ENCODE measurements at regions of chr11 and their contacts with region 1.

Region 1: GRCh38 chr11:119975561-119976152 is 162.3 kb downstream of the TRIM29 start:
- DNase-seq: peak; percentile 67 to 97 (median 78)

Region 2: DNA sequence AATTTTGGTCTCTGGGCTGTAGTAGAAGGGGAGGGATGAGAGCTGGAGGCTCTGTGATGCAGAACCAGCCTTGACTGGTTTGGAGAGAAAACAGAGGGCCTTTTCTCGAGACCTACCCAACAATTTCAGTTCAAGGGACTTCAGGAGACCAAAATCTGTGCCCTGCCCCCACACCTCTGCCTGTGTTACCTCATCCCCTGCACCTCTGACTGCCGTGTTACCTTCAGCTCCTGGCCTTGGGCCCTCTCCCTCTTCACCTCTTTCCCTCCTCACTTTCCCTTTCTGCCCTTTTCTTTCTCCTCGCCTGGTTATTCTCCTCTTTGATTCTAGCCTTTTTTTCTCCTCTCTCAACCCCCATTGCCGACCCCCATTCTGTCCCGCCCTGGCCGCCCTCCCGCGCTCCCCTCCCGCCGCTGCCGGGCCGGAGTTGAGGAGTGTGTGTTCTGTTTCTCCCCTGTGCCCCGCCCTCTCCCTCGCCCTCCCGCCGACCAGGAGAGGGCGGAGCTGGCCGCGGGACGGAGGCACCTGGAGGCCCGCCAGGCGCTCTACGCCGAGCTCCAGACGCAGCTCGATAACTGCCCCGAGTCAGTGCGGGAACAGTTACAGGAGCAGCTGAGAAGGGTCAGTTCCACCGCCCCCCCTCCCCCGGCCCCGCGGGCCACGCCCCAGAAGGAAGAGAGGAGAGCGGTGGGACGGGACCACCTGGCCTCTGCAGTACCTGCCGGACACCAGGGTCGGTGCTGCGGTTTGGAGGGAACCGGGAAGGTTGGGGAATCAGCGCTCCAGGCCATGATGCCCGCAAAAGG is 1341.0 kb before region 1 on chr11:
- intact Hi-C with region 1: no loop called
- DNase-seq: peak in 5 of 10 donors; percentile 36 to 89 (median 71)

Region 3: DNA sequence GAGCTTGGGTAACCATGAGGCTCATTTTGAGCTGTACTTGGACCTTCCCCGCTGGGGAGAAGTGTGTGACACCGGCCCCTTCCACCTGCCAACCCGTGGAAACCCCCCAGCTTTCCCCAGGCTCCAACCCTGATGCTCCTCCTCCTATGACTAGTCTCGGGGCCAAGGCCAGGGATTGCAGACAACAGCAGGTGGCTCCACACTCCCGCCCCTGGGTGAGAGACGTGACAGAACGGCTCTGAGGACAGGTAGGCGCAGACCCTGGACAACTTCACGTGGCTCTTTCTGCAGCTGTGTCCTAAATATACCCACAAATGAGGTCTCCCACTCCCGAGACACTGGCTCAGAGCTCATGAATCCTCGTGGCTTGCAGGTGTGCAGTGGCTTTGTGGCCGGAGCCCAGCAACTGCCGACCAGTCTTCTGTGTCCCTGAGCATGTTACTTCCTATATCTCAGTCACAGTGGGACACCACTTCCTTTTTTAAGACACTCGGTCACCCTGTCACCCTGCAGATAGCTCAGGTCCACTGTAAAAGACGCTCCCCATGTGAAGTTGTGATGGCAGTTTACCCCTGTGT is 301.8 kb before region 1 on chr11:
- intact Hi-C with region 1: loop called (anchors 5 kb)
- DNase-seq: peak in 2 of 10 donors; percentile 59 to 84

Region 4: GRCh38 chr11:119891055-119891768 is 84.4 kb before region 1 on chr11:
- intact Hi-C with region 1: loop called (anchors 5 kb)
- DNase-seq: peak; percentile 56 to 97 (median 82)

Region 5: GRCh38 chr11:120034881-120035630 is 59.4 kb after region 1 on chr11:
- intact Hi-C with region 1: no loop called
- DNase-seq: peak in 1 of 10 donors; percentile 71

Region 6: GRCh38 chr11:120089036-120090001 is 113.7 kb after region 1 on chr11:
- intact Hi-C with region 1: loop called (anchors 5 kb)
- DNase-seq: peak in 9 of 10 donors; percentile 28 to 92 (median 55)

Region 7: DNA sequence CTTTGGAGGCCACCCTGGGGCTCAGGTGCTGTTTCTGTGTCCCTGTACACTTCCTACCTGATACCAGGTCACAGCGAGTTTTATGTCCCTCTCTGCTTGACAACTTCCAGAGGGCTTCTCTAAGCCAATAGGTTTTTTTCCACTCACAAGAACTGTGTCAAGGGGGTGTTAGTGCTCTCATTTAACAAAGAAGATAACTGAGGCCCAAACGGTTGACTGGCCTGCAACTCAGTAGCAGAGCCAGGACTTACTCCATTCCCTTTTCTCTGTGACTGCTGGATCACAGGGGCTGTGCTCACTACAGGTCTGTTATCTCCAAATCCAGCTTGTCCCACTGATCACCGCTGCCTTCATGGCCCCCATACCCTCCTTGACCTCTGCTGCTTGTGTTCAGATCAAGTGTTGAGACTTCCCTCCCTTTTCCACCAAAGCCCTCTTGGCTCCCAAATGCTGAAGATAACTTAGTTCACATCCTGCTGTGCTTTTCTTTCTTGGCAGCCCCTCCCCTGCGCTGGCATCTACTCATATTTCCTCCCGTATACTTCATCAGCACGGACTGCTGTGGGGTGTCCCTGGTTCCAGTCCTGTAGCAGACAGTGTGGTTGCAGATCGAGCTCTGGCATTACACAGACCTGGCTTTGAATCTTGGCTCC is 305.6 kb after region 1 on chr11:
- intact Hi-C with region 1: no loop called
- DNase-seq: no peak

Measured in posterior cingulate gyrus (tissue), 11 donors.